Panc1 (cell line): ENCODE measurements at regions of chr5 and their contacts with region 1.

Region 1: GRCh38 chr5:176693477-176693851 is 46.2 kb downstream of the TSPAN17 start:
- DNase-seq: no peak
- ATAC-seq: no peak
- H3K4me3 ChIP-seq: no peak overlapping the region
- H3K27ac ChIP-seq: no peak overlapping the region
- H3K4me1 ChIP-seq: no peaks in the 10 kb centered on the region; the same call in 1 of the 2 replicates
- H3K27me3 ChIP-seq: no peaks in the 10 kb centered on the region
- CTCF ChIP-seq: no peak

Region 2: DNA sequence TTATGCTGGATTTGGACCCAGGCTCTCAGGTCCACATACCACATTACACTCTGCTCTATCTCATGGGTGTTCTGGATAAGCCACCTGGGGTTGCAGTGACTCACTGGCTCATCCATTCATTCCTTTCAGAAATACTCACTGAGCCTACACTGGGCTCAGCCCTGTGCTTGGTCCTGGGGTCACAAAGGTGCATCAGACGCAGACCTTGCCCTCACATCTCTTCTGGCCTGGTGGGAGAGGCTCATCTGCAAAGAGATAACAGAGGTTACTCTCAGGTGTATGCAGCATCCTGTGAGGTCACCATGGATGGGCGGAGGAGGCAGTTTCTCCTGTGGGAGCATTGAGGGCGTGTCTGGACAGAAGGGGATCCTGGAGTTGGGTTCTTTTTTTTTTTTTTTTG is 132.2 kb before region 1 on chr5:
- CTCF ChIA-PET with region 1: no interaction called
- POLR2A ChIA-PET with region 1: interaction called, 13 read pairs
- in situ Hi-C with region 1: no loop called
- intact Hi-C with region 1: no loop called
- DNase-seq: no peak
- ATAC-seq: no peak
- H3K4me3 ChIP-seq: no peak overlapping the region
- H3K27ac ChIP-seq: no peak overlapping the region
- H3K4me1 ChIP-seq: no peaks in the 10 kb centered on the region
- H3K27me3 ChIP-seq: no peaks in the 10 kb centered on the region
- CTCF ChIP-seq: no peak